ENCODE measurements at regions of chr19 and their contacts with region 1.

Region 1: GRCh38 chr19:55632463-55632834 is 8.1 kb upstream of the ZNF784 start:
- DNase-seq: peak; percentile 84 to 89
- H3K4me3 ChIP-seq: no peak overlapping the region
- H3K27ac ChIP-seq: no peak overlapping the region
- H3K4me1 ChIP-seq: peaks cover 12% of the 10 kb centered on the region
- H3K27me3 ChIP-seq: no peaks in the 10 kb centered on the region
- CTCF ChIP-seq: peak; percentile 96

Region 2: DNA sequence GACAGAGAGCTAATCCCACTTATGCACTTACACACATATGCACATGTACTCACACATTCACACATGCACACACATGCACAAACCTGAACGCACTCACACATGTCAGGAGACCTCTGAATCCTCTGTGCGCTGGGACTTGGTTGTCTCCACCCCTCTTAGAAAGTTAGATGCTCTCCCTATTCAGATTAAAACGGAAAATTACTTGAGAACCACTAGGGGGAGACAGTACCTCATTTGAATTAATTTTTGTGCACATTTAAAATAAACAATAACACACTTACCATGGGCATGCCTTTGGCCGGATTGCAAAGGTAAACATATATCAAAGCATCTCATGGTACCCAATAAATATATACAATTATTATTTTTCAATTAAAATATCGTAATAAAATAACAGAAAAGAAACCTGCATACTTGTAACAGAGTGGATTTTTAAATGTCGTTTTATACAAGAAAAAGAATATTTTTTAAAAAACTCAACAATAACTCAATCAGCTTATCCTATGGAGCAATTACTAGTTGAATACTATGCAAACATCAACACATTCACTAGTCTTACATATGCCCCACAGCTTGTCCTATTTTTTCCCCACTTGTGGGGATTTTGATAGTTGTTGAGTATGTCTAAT is 979.2 kb before region 1 on chr19:
- CTCF ChIA-PET with region 1: no interaction called
- POLR2A ChIA-PET with region 1: no interaction called
- intact Hi-C with region 1: loop called (anchors 10 kb)
- DNase-seq: no peak
- H3K4me3 ChIP-seq: no peak overlapping the region
- H3K27ac ChIP-seq: no peak overlapping the region
- H3K4me1 ChIP-seq: no peaks in the 10 kb centered on the region
- H3K27me3 ChIP-seq: peaks cover 43% of the 10 kb centered on the region
- CTCF ChIP-seq: peak; percentile 86

Region 3: DNA sequence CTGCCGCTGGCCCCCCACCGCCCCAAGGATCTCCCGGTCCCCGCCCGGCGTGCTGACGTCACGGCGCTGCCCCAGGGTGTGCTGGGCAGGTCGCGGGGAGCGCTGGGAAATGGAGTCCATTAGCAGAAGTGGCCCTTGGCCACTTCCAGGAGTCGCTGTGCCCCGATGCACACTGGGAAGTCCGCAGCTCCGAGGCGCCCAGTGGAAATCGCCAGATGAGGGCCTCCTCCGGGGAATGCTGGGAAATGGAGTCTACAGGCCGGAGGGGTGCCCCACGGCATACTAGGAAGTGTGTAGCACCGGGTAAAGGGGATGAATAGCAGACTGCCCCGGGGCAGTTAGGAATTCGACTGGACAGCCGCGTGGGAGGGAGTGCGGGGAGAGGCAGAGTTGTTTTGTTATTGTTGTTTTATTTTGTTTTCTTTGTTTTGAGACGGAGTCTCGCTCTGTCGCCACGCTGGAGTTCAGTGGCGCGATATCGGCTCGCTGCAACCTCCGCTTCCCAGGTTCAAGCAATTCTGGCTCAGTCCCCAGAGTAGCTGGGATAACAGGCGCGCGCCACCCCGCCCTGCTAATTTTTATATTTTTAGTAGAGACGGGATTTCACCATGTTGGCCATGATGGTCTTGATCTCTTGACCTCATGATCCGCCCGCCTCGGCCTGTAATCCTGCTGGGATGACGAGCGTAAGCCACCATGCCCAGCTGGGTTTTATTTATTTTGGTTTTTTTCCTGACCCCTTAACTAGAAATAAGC is 514.6 kb before region 1 on chr19 and contains the start of gene PPP1R12C:
- CTCF ChIA-PET with region 1: no interaction called
- POLR2A ChIA-PET with region 1: interaction called, 21 read pairs
- intact Hi-C with region 1: no loop called
- DNase-seq: peak; percentile 98 to 99
- H3K4me3 ChIP-seq: peak within 1 kb of the TSS; percentile 99
- H3K27ac ChIP-seq: peak within 1 kb of the TSS; percentile 47
- H3K4me1 ChIP-seq: peaks cover 22% of the 10 kb centered on the region
- H3K27me3 ChIP-seq: no peaks in the 10 kb centered on the region
- CTCF ChIP-seq: no peak; the same call in 1 of the 2 replicates
- total RNA-seq, gene PPP1R12C: 110 and 114 TPM in 2 replicates

Region 4: DNA sequence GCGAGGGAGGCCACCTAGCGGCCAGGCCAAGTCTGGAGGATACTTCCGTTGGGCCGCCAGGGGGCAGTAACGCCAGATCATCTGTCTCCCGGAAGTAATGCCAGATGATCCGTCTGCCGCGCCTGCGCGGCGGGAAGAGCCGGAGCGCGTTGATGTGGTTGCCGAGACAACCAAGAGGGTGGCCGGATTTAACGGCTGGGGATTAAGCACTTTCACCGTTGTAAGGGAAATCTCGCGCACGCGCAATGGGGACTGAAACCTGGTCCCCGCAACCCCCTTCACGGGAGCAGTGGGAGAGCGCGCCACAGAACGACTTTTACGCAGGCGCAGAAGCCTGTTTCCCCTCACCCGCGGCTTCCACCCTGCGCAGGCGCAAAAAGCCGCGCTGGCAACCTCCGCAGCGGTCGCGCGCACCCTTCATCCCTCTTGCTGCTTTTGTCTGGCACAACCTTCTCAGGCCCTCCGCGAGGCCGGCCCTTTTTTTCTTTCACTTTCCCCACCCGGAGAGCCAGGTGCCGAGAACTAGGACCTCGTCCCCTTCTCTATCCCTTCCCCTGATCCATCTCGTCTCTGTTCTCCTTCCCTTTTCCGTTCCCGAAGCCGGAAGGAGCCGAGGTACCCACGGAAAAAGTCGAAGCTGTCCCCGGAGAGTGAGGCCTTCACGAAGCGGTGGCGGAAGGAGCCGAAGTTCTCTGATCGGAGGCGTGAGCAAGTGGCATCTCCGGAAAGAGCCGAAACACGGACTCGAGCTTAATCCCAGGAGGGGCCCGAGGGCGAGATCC is 21.5 kb after region 1 on chr19:
- CTCF ChIA-PET with region 1: no interaction called
- POLR2A ChIA-PET with region 1: interaction called, 3 read pairs
- intact Hi-C with region 1: loop called (anchors 2 kb)
- DNase-seq: peak; percentile 99 to 100
- H3K4me3 ChIP-seq: peak overlapping the region; percentile 72
- H3K27ac ChIP-seq: peak overlapping the region; percentile 95
- H3K4me1 ChIP-seq: peaks cover 25% of the 10 kb centered on the region
- H3K27me3 ChIP-seq: no peaks in the 10 kb centered on the region
- CTCF ChIP-seq: peak; percentile 97

Region 5: DNA sequence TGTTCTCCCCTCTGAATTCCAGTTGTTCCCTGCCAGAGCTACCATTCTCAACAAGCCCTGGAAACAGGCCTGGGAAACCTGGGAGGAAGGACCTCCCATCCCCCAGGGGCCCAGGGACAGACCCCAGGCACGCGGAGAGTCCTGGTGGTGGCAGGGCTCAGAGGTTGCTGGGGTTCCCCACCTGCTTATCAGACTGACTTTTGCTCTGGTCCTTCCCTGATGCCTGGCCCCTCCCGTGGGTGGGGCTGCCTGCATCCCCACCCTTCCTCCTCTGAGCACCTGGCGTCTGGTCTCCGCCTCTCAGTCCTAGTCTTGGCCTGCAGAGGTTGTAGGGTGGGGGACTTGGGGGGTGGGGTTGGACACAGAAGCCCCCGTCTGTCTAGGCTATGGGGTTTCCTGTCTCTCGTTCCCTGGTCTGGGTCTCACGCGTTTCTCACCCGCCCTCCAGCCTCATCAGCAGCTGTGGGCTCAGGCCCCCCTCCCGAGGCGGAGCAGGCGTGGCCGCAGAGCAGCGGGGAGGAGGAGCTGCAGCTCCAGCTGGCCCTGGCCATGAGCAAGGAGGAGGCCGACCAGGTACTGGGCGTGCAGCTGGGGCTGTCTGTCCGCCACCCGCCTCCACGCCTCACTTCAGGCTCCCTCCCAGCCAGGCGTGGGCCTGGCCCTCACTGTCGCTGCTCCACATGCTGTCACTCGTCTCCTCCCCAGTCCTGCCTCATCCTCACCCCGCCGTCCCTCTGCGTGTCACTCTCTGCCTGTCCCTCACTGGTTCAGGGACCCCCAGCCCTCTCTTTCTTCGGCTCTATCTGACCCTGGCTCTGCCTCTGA is 56.2 kb after region 1 on chr19:
- CTCF ChIA-PET with region 1: no interaction called
- POLR2A ChIA-PET with region 1: no interaction called
- intact Hi-C with region 1: no loop called
- DNase-seq: no peak
- H3K4me3 ChIP-seq: no peak overlapping the region
- H3K27ac ChIP-seq: no peak overlapping the region
- H3K4me1 ChIP-seq: no peaks in the 10 kb centered on the region
- H3K27me3 ChIP-seq: no peaks in the 10 kb centered on the region
- CTCF ChIP-seq: no peak

Region 6: DNA sequence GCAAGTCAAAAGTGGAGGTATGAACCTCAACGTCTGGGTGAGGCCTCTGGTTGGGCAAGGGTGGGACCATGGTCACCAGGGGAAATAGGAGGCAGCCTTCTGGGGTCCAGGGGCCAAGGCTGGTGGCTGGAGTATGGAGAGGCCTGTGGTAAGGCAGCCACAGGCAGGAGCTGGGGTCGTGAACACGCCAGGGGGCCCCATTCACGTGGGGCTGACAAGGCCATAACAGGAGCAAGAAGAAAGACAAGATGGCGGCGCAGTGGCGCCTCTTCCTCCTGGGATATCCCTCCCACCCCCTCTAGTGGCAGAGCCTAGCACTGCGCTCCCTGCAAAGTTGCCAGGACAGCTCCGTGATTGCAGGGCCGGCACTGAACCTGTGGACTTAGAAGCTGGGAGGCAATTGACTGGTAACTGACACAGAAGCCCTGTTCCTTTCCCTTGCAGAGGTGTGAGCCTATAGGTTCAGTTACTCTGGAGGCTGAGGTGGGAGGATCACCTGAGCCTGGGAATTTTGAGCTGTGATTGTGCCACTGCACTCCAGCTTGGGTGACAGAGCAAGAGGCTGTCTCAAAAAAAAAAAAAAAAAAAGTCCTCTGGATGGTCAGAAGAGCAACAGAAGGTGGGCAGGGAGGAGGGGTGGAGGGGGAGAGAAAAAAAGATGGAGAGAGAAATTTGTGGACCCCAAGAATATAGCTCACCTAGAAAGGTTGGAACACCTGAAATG is 620.4 kb after region 1 on chr19:
- CTCF ChIA-PET with region 1: no interaction called
- POLR2A ChIA-PET with region 1: no interaction called
- intact Hi-C with region 1: loop called (anchors 10 kb)
- DNase-seq: peak; percentile 56 to 82
- H3K4me3 ChIP-seq: no peak overlapping the region
- H3K27ac ChIP-seq: no peak overlapping the region
- H3K4me1 ChIP-seq: no peaks in the 10 kb centered on the region
- H3K27me3 ChIP-seq: no peaks in the 10 kb centered on the region
- CTCF ChIP-seq: peak; percentile 89

Region 7: DNA sequence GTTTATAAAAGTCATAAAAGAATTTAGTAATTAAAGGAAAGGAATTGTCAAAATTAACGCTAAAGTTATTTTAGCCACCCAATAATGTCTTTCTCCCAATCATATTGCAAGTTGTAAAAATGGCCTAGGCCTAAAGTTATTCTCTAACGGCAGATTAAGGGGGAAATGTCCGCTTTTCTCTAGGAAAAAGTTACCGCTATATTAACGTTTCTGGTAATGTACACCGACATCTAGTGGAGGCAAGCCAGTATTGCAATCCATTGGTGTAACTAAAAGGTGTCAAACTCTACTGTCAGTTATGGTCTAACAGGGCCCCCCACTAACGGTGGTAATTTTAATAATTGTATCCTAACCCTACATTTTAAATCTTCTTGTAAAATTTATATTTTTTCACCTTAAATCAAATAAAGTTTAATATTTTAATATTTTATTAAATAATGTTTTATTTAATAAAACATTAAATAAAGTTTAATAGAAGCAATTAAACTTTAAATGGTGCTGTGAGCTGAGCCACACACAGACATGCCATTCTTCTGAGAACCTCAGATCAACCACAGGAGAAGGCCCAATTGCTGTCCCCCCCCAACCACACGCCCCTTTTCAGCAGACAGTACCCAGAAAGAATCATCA is 718.1 kb after region 1 on chr19:
- CTCF ChIA-PET with region 1: no interaction called
- POLR2A ChIA-PET with region 1: no interaction called
- intact Hi-C with region 1: loop called (anchors 5 kb)
- DNase-seq: peak in 1 of 2 experiments; percentile 28
- H3K4me3 ChIP-seq: no peak overlapping the region
- H3K27ac ChIP-seq: no peak overlapping the region
- H3K4me1 ChIP-seq: no peaks in the 10 kb centered on the region
- H3K27me3 ChIP-seq: peaks cover 48% of the 10 kb centered on the region
- CTCF ChIP-seq: peak; percentile 92

Measured in PC-9 (cell line).